Mammary epithelial cell (primary cell): ENCODE measurements at regions of chr2 and their contacts with region 1.

Region 1: DNA sequence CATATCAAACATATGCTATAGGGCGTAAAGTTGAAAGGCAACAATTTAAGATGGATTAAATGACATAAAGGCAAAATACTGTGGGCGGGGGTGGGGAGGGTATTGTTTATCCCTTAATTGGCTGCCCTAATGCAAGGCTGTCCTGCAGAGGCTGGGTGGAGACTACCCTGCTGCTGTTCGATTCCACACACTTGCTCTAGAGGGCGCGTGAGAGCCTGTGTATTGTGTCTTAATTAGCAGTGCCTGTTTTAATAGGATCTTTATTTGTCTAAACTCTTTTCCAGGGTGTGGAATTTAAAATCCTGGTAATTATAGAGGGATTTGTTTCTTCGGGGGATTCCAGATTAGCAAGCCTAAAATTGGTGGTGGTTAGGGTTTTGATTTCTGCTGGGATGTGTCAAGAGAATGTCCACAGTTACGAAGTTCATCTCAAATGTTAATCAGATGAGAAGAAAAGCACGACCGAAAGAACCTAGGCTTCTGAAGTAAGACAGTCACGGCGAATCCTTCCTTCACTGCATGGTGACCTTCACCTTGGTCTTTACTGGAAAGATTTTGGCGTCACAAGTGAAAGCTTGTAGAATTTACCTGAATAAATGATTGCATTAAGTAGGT is 103.5 kb upstream of the MAP3K20 start:
- DNase-seq: peak; percentile 44
- H3K4me3 ChIP-seq: no peak overlapping the region
- H3K27ac ChIP-seq: no peak overlapping the region
- H3K4me1 ChIP-seq: peaks cover 3% of the 10 kb centered on the region
- H3K27me3 ChIP-seq: no peaks in the 10 kb centered on the region
- CTCF ChIP-seq: peak; percentile 91 to 98

Region 2: GRCh38 chr2:172813314-172813888 is 158.7 kb before region 1 on chr2:
- CTCF ChIA-PET with region 1: no interaction called
- dilution Hi-C with region 1: no loop called
- in situ Hi-C with region 1: no loop called
- intact Hi-C with region 1: no loop called
- DNase-seq: no peak
- H3K4me3 ChIP-seq: no peak overlapping the region
- H3K27ac ChIP-seq: no peak overlapping the region
- H3K4me1 ChIP-seq: no peaks in the 10 kb centered on the region
- H3K27me3 ChIP-seq: no peaks in the 10 kb centered on the region
- CTCF ChIP-seq: peak; percentile 46 to 65

Region 3: GRCh38 chr2:172995323-172996244 is 23.5 kb after region 1 on chr2:
- CTCF ChIA-PET with region 1: interaction called, 10 read pairs
- dilution Hi-C with region 1: no loop called
- in situ Hi-C with region 1: no loop called
- intact Hi-C with region 1: no loop called
- DNase-seq: peak; percentile 78
- H3K4me3 ChIP-seq: no peak overlapping the region
- H3K27ac ChIP-seq: peak overlapping the region; percentile 57
- H3K4me1 ChIP-seq: peaks cover 32% of the 10 kb centered on the region
- H3K27me3 ChIP-seq: no peaks in the 10 kb centered on the region
- CTCF ChIP-seq: peak; percentile 6 to 26